SK-N-SH (cell line): ENCODE measurements at regions of chr3 and their contacts with region 1.

Region 1: DNA sequence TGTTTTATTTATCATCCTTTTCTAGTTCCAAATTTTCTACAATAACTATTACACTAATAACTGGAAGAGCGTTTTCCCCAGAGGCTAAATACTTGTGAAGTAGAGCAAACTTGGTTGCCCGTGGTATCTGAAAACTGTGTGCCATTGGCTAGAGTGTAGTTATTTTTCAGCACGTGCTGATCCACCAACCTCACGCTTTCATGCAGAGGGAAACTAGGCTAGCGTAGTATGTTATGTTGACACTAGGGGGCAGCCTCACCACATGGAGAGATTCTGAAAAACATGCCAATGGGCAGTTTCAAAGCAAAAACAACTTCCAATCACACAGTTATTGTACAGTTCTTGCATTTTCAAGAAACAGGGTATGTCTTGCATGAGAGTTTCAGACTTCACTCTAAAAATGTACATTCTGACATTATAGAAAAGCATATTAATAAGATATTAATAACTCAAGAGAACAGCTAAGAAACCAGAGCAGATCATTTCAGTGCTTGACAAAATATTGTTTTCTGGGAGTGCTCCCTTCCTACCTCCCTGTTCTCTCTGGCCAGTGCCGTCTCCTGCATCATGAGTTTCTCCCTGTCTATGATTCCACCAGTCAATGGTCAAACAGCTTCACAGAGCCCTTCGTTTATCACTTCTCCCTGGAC is 39.7 kb downstream of the SPATA12 start:
- DNase-seq: peak; percentile 75
- H3K4me3 ChIP-seq: peak overlapping the region in 1 of 2 experiments; percentile 7; a peak in 1 of 4 replicates
- H3K27ac ChIP-seq: peak overlapping the region in 1 of 2 experiments; percentile 78; a peak in 2 of 4 replicates
- H3K4me1 ChIP-seq: peaks cover 0 to 7% of the 10 kb centered on the region in 2 experiments; a peak in 2 of 4 replicates
- H3K27me3 ChIP-seq: no peaks in the 10 kb centered on the region
- CTCF ChIP-seq: peak; percentile 90
- EP300 ChIP-seq: no peak
- RAD21 ChIP-seq: peak; percentile 97

Region 2: GRCh38 chr3:56997675-56998074 is 102.5 kb before region 1 on chr3:
- CTCF ChIA-PET with region 1: interaction called, 28 read pairs
- POLR2A ChIA-PET with region 1: no interaction called
- DNase-seq: no peak
- H3K4me3 ChIP-seq: no peak overlapping the region
- H3K27ac ChIP-seq: no peak overlapping the region
- H3K4me1 ChIP-seq: no peaks in the 10 kb centered on the region
- H3K27me3 ChIP-seq: no peaks in the 10 kb centered on the region
- CTCF ChIP-seq: no peak
- EP300 ChIP-seq: no peak
- RAD21 ChIP-seq: no peak

Region 3: DNA sequence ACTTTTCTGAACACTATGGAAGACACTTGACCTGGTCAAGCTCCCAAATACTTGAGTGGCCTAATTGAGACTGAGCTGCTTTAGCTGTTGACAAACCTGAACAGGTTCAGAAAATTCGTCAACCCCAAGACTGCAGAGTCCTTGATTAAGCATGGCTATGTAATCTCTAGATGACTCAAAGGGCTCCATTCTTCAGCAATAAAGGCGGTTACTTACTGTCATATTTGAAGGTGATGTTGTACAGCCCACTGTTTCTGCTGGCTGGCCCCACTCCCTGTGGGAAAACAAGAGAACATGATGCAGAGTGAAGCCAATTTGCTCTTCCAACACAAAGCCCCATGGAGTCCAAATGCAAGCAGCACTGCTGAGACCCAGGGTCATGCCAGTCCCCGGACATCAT is 19.9 kb after region 1 on chr3:
- CTCF ChIA-PET with region 1: interaction called, 21 read pairs
- POLR2A ChIA-PET with region 1: no interaction called
- DNase-seq: peak; percentile 42
- H3K4me3 ChIP-seq: no peak overlapping the region; a peak in 1 of 4 replicates
- H3K27ac ChIP-seq: peak overlapping the region in 1 of 2 experiments; percentile 94; a peak in 2 of 4 replicates
- H3K4me1 ChIP-seq: peaks cover 0 to 49% of the 10 kb centered on the region in 2 experiments; a peak in 2 of 4 replicates
- H3K27me3 ChIP-seq: no peaks in the 10 kb centered on the region
- CTCF ChIP-seq: no peak
- EP300 ChIP-seq: no peak
- RAD21 ChIP-seq: no peak

Region 4: GRCh38 chr3:57164657-57165573 is 64.7 kb after region 1 on chr3 and contains the start of gene IL17RD:
- CTCF ChIA-PET with region 1: interaction called, 52 read pairs
- POLR2A ChIA-PET with region 1: interaction called, 3 read pairs
- DNase-seq: peak; percentile 98
- H3K4me3 ChIP-seq: peak within 1 kb of the TSS; percentile 76 to 82
- H3K27ac ChIP-seq: peak within 1 kb of the TSS in 1 of 2 experiments; percentile 99; a peak in 2 of 4 replicates
- H3K4me1 ChIP-seq: peaks cover 7 to 53% of the 10 kb centered on the region in 2 experiments; a peak in 2 of 4 replicates
- H3K27me3 ChIP-seq: peaks cover 15% of the 10 kb centered on the region; the same call in 1 of the 2 replicates
- CTCF ChIP-seq: no peak
- EP300 ChIP-seq: no peak
- RAD21 ChIP-seq: no peak
- polyA plus RNA-seq, gene IL17RD: 2.4 and 3.6 TPM in 2 replicates

Region 5: GRCh38 chr3:57221883-57222282 is 121.7 kb after region 1 on chr3:
- CTCF ChIA-PET with region 1: interaction called, 38 read pairs
- POLR2A ChIA-PET with region 1: no interaction called
- DNase-seq: peak; percentile 36
- H3K4me3 ChIP-seq: no peak overlapping the region
- H3K27ac ChIP-seq: no peak overlapping the region
- H3K4me1 ChIP-seq: peaks cover 0 to 3% of the 10 kb centered on the region in 2 experiments; a peak in 2 of 4 replicates
- H3K27me3 ChIP-seq: no peaks in the 10 kb centered on the region
- CTCF ChIP-seq: peak; percentile 53
- EP300 ChIP-seq: no peak
- RAD21 ChIP-seq: peak; percentile 80